ENCODE measurements at regions of chr16 and their contacts with region 1.

Region 1: GRCh38 chr16:46929378-46930332 is 43.8 kb downstream of the DNAJA2 start:
- DNase-seq: peak; percentile 11
- H3K4me3 ChIP-seq: no peak overlapping the region
- H3K27ac ChIP-seq: no peak overlapping the region
- H3K27me3 ChIP-seq: no peaks in the 10 kb centered on the region
- CTCF ChIP-seq: peak; percentile 87

Region 2: GRCh38 chr16:46918861-46919792 is 10.5 kb before region 1 on chr16:
- CTCF ChIA-PET with region 1: interaction called, 25 read pairs
- POLR2A ChIA-PET with region 1: no interaction called
- DNase-seq: no peak
- H3K4me3 ChIP-seq: no peak overlapping the region
- H3K27ac ChIP-seq: no peak overlapping the region
- H3K27me3 ChIP-seq: no peaks in the 10 kb centered on the region
- CTCF ChIP-seq: no peak

Region 3: GRCh38 chr16:46947900-46948547 is 18.4 kb after region 1 on chr16:
- CTCF ChIA-PET with region 1: interaction called, 11 read pairs
- POLR2A ChIA-PET with region 1: no interaction called
- DNase-seq: no peak
- H3K4me3 ChIP-seq: no peak overlapping the region
- H3K27ac ChIP-seq: no peak overlapping the region
- H3K27me3 ChIP-seq: no peaks in the 10 kb centered on the region
- CTCF ChIP-seq: peak; percentile 73

Measured in AG04450 (cell line).